Left cardiac atrium (tissue), 4 donors: ENCODE measurements at regions of chr4 and their contacts with region 1.

Region 1: DNA sequence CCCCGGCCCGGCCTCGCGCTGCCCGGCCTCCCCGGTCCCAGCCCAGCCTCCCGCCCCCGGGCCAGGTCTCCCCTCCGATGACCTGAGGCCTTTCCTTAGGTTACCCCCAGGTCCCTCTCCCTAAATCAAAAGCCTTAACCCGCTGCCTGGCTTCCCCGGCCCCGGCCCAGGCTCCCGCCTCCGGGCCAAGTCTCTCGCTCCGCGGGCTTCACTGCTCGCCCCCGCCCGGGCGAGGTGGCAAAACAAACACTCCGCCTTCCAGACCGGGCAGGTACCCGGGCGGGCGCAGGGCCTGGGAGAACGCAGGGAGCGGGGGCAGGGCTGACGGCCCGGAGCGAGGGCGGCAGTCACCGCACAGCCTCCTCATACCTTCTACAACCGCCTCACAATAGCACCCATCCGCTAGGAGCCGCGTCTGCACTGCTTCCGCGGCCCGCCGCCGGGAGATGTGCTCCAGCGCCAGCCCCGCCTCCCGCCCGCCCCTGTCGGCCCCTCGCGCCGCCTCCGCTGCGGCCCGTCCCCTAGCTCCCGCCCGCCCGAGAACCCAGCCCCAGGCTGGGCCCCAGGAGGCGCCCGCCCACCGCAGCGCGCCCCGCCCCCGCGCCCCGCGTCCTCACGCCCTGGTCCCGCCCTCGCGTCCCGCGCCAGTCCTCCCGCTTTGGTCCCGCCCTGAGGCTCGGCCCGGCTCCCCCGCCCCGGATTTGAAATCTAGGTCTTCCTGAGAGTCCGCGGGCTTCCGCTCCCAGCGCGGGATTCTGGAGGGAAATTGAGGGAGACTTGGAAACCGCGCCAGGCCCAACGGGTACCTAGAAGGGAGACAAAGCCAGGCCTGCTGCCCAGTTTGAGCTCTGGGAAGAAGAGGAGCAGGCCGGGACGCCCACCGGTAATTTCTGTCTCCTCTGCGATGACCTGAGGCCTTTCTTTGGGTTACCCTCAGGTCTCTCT is at the starts of genes CASP3 and PRIMPOL:
- DNase-seq: peak; percentile 97
- ATAC-seq: peak; percentile 97
- total RNA-seq, gene CASP3: 10.2 to 12.0 TPM
- total RNA-seq, gene PRIMPOL: 9.8 to 10.2 TPM

Region 2: DNA sequence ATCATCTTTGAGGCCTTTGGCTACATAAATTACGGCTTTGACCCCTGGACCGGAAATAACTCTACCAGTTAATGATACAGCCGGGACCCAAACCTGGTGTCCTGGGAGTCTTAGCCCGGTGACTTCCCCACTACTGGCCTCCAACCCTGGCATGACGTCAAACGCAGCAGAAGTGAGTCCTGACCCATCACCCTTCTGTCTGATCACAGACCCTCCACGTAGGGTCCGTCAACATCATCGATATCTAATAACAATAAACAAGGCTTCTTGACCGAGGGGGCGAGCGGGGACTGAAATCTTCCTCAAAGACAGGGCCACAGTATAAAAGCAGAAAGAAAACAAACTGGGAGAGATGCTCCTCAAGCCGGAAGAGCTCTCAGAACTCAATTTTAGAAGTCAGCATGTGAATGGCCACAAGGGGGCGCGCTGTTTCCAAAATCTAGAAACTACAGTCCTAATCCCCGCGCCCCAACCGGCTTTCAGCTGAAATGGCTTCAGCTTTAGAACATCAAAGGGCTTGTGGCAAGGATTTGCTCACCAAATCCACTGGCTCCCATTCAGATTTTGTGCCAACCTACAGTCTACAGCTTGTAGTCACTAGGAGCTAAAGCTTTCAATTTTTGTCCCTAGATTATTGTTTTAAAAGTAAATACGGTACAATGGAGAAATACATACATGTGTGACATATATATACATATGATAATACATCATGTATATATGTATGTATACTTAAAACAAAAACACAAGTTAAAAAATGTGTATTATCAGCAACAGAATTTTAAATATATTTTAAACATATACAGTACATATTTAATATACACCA is 385.2 kb before region 1 on chr4:
- intact Hi-C with region 1: loop called in 1 of 2 experiments (anchors 10 kb)
- DNase-seq: peak; percentile 94
- ATAC-seq: peak; percentile 78 to 84

Region 3: DNA sequence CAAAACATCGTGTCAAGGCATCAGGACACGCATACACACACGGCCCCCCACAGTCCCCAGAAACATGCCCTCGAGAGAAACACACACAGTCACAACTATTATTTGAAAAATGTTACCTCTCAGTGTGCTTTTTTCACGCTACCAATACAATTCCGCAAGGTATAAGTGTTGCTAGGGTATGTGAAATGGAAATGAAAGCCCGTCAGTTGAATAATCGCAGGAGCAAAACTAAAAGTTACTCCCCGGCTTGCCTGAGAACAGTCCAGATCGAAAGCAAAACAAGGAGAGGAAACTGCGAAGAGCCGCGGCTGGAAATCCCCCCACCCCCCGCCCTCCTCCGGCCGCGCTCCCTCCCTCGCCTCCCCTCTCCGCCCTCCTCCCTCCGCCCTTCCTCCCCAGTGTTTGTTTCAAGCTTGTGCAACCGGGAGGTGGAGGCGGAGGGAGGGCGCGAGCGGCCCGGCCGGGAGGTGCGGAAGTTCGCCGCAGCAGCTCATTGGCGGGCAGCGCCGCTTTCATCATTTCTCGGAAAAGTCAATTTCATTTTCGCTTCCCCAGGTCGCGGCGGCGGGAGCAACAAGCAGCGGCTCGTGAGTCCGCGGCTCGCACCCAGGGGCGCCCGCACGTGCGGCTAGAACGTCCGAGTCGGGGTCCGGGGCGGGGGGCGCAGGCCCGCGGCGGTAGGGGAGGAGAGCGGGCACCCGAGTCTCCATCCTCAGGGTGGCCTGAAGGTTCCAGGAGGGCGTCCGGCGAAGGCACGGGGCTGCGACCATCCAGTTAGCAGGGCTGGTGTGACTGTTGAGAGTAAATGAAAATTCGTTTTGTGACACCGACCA is 174.8 kb before region 1 on chr4 and contains the start of gene IRF2:
- intact Hi-C with region 1: loop called in 1 of 2 experiments (anchors 10 kb)
- DNase-seq: peak; percentile 98
- ATAC-seq: peak; percentile 90 to 94
- total RNA-seq, gene IRF2: 27.1 to 30.0 TPM

Region 4: GRCh38 chr4:184733654-184734524 is 84.6 kb after region 1 on chr4 and contains the start of gene CENPU:
- intact Hi-C with region 1: loop called in 1 of 2 experiments (anchors 10 kb)
- DNase-seq: peak; percentile 96
- ATAC-seq: peak; percentile 98 to 99
- total RNA-seq, gene CENPU: 1.1 to 4.4 TPM

Region 5: DNA sequence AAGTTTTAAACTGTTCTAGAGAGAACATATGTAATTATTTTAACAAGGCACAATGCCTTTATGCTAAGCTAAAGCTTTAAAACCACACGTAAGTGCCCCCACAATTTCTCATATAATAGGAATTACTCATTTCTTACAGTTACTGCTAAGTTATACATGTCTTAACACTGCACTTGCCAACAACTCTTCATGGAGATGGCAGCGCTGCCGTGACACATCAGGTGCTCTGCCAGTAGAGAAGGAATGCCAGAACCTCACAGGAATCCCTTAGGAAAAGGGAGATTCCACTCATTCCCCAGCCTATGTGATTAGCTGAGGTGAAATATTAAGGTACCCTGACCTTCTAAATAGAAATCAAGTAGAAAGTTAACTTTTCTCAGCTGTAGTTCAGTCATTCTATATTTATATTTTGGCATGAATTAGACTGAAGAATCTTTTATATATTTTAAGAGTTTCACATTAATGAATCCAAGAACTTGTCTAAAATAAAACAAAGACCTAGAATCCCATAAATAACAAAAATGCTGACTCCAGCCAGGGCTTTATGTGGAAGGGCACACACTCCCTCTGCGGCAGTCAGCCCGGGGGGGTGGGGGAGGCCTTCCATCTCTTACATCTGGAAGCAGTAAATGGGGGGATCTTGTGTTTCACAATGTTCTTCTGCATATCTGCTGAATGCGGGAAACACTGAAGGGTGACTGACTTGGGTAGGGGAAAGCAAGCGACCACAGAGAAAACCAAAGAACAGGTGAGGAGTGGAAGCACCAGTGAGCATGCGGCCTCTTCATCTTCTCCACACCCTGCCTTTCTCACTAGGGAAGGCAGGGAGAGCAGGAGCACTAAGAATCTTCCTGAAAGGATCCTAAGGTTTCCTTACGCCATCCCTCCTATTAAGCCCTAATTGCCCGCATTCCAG is 152.7 kb after region 1 on chr4:
- intact Hi-C with region 1: no loop called
- DNase-seq: no peak
- ATAC-seq: peak in 1 of 2 donors; percentile 57